Gastrocnemius medialis (tissue), 4 donors: ENCODE measurements at regions of chr12 and their contacts with region 1.

Region 1: DNA sequence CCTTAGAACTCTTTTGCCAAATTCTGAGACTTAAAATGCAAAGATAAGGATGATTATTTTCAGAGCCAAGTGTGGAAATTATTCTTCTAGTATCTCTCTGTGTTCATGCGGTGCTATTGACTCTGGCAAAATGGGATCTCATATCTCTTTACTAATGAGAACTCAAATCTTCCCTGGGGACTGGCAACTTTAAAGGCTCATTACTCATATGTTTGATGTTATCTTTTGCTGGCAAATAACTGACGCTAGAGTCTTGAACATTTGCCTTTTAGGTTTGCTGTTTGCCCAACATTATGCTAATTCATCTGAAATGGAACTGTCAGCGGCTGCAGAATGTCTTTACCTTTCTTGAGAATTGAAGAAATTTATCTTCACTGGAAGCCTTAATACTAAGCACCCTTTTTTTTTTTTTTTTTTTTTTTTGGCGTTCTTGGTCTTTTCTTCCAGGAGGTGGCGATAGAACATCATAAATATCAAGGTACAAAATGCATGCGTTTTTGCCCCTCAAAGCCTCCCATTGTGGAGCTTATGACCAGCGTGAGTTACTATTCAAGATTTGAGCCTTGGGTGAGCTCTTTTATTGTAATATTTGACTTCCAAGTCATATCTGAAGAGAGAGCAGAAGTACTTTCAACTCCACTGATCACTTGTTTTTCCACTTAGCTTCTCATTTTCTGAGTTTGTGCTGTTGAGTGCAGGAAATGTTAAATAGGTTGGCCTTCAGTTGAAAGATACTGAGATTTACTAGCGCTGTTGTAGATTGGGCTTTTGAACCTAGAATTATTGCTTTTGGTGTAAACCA is 86.6 kb downstream of the CAND1 start:
- DNase-seq: peak in 1 of 2 donors; percentile 14
- ATAC-seq: peak; percentile 74 to 79
- H3K4me3 ChIP-seq: peak overlapping the region in 2 of 4 donors; percentile 1 to 4
- H3K27ac ChIP-seq: peak overlapping the region; percentile 69 to 81 (median 76)
- H3K4me1 ChIP-seq: peaks cover 38 to 42% of the 10 kb centered on the region in 2 donors
- H3K27me3 ChIP-seq: no peaks in the 10 kb centered on the region
- CTCF ChIP-seq: peak in 4 of 5 experiments; percentile 42 to 59 (median 56)
- POLR2A ChIP-seq: no peak

Region 2: GRCh38 chr12:67394550-67394949 is 38.8 kb after region 1 on chr12:
- in situ Hi-C with region 1: no loop called
- intact Hi-C with region 1: loop called (anchors 1 kb)
- DNase-seq: peak; percentile 77 to 86
- ATAC-seq: peak; percentile 90 to 97
- H3K4me3 ChIP-seq: no peak overlapping the region
- H3K27ac ChIP-seq: peak overlapping the region; percentile 64 to 79 (median 72)
- H3K4me1 ChIP-seq: peaks cover 22 to 36% of the 10 kb centered on the region in 2 donors
- H3K27me3 ChIP-seq: no peaks in the 10 kb centered on the region
- CTCF ChIP-seq: peak in 3 of 5 experiments; percentile 36 to 63 (median 60)
- POLR2A ChIP-seq: no peak

Region 3: DNA sequence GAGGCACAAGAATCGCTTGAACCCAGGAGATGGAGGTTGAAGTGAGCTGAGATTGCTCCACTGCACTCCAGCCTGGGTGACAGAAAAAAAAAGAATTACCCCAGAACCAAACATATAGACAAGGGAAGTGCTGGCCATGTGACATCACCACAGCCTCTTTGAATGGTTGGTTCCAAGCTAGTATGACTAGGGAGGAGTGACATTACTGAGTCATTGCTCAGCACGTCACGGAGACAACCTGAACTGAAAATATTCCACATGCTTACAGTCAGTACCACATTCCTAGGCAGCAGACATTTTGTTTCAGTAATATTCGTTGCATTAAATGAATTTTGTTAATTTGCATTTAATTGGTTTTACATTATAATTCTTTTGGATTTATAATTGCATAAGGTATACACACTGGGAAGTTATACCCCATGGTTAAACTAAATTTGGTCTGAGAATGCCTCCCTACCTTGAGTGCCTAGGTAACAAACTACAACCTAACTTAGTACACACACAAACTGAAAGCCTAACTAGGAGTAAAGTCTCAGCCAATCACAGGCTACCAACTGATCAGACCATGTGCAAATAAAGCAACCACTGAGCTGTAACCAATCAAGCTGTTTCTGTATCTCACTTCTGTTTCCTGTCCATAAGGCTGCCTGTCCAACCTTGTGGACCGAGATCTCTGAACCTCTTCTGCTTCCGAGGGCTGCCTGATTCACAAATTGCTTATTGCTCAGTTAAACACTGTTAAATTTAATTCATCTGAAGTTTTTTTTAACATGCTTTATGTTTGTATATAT is 77.8 kb after region 1 on chr12:
- in situ Hi-C with region 1: loop called in 2 of 4 experiments (anchors 5 kb)
- intact Hi-C with region 1: no loop called
- DNase-seq: no peak
- ATAC-seq: no peak
- H3K4me3 ChIP-seq: no peak overlapping the region
- H3K27ac ChIP-seq: peak overlapping the region in 2 of 4 donors; percentile 12 to 80
- H3K4me1 ChIP-seq: peaks cover 25 to 26% of the 10 kb centered on the region in 2 donors
- H3K27me3 ChIP-seq: no peaks in the 10 kb centered on the region
- CTCF ChIP-seq: no peak
- POLR2A ChIP-seq: no peak

Region 4: GRCh38 chr12:67617619-67618018 is 261.8 kb after region 1 on chr12:
- in situ Hi-C with region 1: no loop called
- intact Hi-C with region 1: no loop called
- DNase-seq: no peak
- ATAC-seq: no peak
- H3K4me3 ChIP-seq: no peak overlapping the region
- H3K27ac ChIP-seq: no peak overlapping the region
- H3K4me1 ChIP-seq: peaks cover 0 to 3% of the 10 kb centered on the region in 2 donors
- H3K27me3 ChIP-seq: no peaks in the 10 kb centered on the region
- CTCF ChIP-seq: no peak
- POLR2A ChIP-seq: no peak

Region 5: GRCh38 chr12:67648521-67649260 is 292.9 kb after region 1 on chr12 and contains the start of gene DYRK2:
- in situ Hi-C with region 1: loop called in 1 of 4 experiments (anchors 10 kb)
- intact Hi-C with region 1: no loop called
- DNase-seq: peak; percentile 56 to 78
- ATAC-seq: peak; percentile 51
- H3K4me3 ChIP-seq: peak within 1 kb of the TSS; percentile 94 to 98 (median 98)
- H3K27ac ChIP-seq: peak within 1 kb of the TSS; percentile 98 to 100 (median 99)
- H3K4me1 ChIP-seq: peaks cover 36 to 42% of the 10 kb centered on the region in 2 donors
- H3K27me3 ChIP-seq: no peaks in the 10 kb centered on the region
- CTCF ChIP-seq: peak in 3 of 5 experiments; percentile 14 to 18 (median 14)
- POLR2A ChIP-seq: peak; percentile 84 to 89
- total RNA-seq, gene DYRK2: 14.1 to 25.7 (median 15.9) TPM

Region 6: DNA sequence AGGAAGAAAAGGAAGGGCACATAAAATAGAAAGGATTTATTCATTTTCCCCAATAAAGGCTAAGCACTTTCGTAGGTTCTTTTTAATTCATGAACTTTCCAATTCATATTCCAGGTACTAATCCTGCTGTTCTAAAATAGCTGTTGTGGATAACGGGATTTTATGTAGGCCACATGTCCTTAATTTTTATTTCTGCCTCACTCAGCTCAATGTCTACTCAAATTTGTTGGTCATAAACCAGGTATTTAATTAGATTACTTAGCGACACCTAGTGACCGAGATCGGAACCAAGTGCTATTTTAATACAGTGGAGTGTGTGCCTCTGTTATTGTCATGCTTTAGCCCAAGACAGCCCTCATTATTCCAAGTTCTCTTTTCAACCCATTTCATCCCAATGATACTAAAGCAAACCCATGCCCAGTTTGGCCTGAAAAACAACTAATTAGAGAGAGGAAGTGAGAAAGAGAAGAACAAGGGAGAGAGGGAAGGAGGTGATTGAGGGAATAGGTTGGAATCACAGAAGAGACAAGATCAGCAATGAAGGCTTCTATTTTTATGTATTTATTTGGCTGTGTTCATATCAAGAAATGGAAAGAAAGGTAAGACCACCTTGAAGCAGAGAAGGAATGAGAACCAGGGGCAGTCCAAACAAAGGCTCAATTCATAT is 587.6 kb after region 1 on chr12:
- in situ Hi-C with region 1: loop called (anchors 5 to 25 kb)
- intact Hi-C with region 1: loop called (anchors 1 kb)
- DNase-seq: peak; percentile 37 to 46
- ATAC-seq: peak; percentile 85
- H3K4me3 ChIP-seq: no peak overlapping the region
- H3K27ac ChIP-seq: peak overlapping the region; percentile 30 to 54 (median 44)
- H3K4me1 ChIP-seq: peaks cover 27 to 38% of the 10 kb centered on the region in 2 donors
- H3K27me3 ChIP-seq: no peaks in the 10 kb centered on the region
- CTCF ChIP-seq: peak; percentile 53 to 83 (median 73)
- POLR2A ChIP-seq: no peak